PC-9 (cell line): ENCODE measurements at regions of chr17 and their contacts with region 1.

Region 1: DNA sequence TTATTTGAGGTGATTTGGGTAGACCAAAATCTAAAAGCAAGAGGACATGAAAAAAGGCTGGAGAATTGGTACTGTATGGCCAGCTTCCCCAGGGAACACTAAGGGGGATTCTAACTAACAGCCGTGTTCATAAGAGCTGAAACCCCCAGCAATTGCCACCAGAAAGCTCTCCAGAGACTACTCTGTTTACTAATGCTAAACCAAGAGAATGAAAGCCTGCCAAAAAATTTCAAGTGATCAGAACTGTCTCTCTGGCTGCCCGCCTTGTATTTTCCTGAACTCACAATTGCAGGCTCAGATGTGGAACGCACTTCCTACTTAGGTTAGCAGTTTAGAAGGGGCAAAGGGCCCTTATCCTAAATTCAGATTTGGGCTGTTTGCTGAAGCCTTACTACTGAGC is 24.1 kb downstream of the MYH10 start:
- DNase-seq: no peak
- H3K4me3 ChIP-seq: no peak overlapping the region
- H3K27ac ChIP-seq: no peak overlapping the region
- H3K4me1 ChIP-seq: no peaks in the 10 kb centered on the region
- H3K27me3 ChIP-seq: peaks cover 40% of the 10 kb centered on the region
- CTCF ChIP-seq: no peak

Region 2: GRCh38 chr17:8581002-8581658 is 25.3 kb before region 1 on chr17:
- CTCF ChIA-PET with region 1: no interaction called
- POLR2A ChIA-PET with region 1: interaction called, 13 read pairs
- intact Hi-C with region 1: no loop called
- DNase-seq: no peak
- H3K4me3 ChIP-seq: no peak overlapping the region
- H3K27ac ChIP-seq: no peak overlapping the region
- H3K4me1 ChIP-seq: no peaks in the 10 kb centered on the region
- H3K27me3 ChIP-seq: peaks cover 40% of the 10 kb centered on the region
- CTCF ChIP-seq: no peak